ENCODE measurements at regions of chr10 and their contacts with region 1.

Region 1: DNA sequence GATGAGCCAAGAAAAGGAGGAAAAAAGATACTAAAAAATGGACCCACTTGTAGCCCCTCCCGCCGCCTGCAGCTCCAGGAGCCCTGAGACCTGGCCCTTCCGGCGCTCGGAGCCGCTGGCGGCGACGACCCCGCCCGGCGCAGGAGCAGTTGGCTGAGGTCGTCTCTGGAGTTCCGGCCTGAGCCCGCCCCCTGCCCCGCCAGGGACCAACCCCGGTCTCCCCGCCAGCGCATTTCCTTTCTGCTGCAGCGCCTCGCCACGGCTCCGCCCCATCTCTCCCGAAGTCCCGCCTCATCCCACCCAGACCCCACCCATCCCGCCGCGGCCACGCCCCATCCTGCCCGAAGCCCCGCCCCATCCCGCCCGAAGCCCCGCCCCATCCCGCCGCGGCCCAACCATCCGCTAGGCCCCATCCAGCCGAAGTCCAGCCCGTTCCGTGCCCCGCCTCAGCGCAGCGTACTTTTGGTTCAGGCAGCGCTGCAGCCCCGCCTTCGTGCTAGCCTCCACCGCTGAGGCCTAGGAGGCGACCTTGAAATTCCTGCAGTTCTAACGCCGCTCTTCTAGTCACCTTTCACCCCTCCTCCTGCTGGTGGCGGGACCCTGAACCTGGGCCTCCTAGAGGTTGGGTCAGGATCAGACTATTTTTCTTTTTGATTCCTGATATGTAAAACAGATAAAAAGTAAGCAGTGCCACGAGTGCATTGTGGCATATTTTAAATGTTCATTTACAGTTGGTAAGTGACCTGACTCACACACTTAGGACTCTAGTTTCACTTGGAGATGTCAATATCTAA is at the start of gene STN1:
- DNase-seq: peak; percentile 98
- H3K4me3 ChIP-seq: peak within 1 kb of the TSS; percentile 30 to 93 (median 71)
- H3K27ac ChIP-seq: peak within 1 kb of the TSS; percentile 87 to 99 (median 96)
- H3K4me1 ChIP-seq: peaks cover 15 to 27% of the 10 kb centered on the region in 2 donors
- H3K27me3 ChIP-seq: no peaks in the 10 kb centered on the region
- CTCF ChIP-seq: peak in 1 of 6 experiments; percentile 12
- POLR2A ChIP-seq: peak; percentile 59 to 90
- total RNA-seq, gene STN1: 20.7 to 37.1 (median 30.7) TPM

Region 2: GRCh38 chr10:103954543-103954942 is 36.3 kb after region 1 on chr10:
- intact Hi-C with region 1: no loop called
- DNase-seq: no peak
- H3K4me3 ChIP-seq: no peak overlapping the region
- H3K27ac ChIP-seq: no peak overlapping the region
- H3K4me1 ChIP-seq: no peaks in the 10 kb centered on the region
- H3K27me3 ChIP-seq: no peaks in the 10 kb centered on the region
- CTCF ChIP-seq: no peak
- POLR2A ChIP-seq: no peak

Region 3: GRCh38 chr10:103966671-103967447 is 48.6 kb after region 1 on chr10 and contains the start of gene SLK:
- intact Hi-C with region 1: loop called (anchors 10 kb)
- DNase-seq: peak; percentile 77 to 82
- H3K4me3 ChIP-seq: peak within 1 kb of the TSS; percentile 73 to 84 (median 80)
- H3K27ac ChIP-seq: peak within 1 kb of the TSS; percentile 92 to 97 (median 95)
- H3K4me1 ChIP-seq: peaks cover 13 to 28% of the 10 kb centered on the region in 2 donors
- H3K27me3 ChIP-seq: no peaks in the 10 kb centered on the region
- CTCF ChIP-seq: no peak
- POLR2A ChIP-seq: peak; percentile 90 to 98
- total RNA-seq, gene SLK: 57.7 to 76.9 (median 64.5) TPM

Measured in thyroid gland (tissue), 4 donors.